ENCODE measurements at regions of chr10 and their contacts with region 1.

Region 1: DNA sequence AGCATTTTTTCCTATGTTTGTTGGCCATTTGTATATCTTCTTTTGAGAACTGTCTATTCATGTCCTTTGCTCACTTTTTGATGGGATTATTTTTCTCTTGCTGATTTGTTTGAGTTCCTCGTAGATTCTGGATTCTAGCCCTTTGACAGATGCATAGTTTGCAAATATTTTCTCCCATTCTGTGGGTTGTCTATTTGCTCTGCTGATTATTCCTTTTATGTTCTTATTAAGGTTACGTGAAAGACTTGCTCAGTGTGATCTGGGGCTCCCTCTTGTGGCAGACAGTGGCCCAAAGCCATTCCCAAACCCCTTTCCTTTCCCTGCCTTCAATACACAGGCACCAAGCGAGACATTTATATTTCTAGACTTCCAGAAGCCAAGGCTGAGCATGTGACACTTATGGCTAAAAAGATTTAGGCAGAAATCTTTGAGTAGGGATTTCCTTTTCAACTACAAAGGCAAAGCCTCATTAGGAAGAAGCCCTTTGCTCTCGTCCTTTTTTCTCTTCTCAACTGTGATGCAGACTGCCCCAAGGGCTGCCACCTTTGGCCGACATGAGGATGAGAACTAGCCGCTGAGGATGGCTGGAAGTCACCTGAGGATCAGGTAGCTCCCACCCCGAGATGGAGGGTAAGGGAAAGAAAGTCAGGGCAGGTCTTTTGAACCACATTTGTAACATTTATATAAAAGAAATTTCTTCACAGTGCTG is 23.6 kb downstream of the ST8SIA6 start:
- DNase-seq: peak; percentile 62 to 92 (median 74)
- H3K4me3 ChIP-seq: no peak overlapping the region
- H3K27ac ChIP-seq: no peak overlapping the region
- H3K4me1 ChIP-seq: no peaks in the 10 kb centered on the region
- H3K27me3 ChIP-seq: peaks cover 11% of the 10 kb centered on the region
- CTCF ChIP-seq: peak; percentile 67 to 91 (median 80)
- POLR2A ChIP-seq: no peak

Region 2: DNA sequence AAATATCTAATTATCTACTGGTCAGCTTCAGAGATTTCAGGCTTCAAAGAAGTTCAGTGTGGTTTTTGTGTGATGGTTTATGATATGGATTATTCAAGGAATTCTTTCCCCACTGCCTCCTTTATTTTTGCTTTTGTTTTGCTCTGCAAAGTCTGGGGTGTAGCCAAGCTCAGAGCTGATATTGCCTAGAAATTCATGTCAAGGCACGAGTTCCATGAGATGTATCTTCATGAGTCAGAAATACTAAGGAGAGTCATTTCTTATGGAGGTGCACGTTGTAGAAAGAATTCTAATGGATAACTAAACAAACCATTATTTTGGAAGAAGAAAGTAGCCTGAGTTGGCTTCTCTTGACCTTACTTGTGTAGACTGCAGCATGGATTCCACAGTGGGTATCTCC is 165.3 kb before region 1 on chr10:
- intact Hi-C with region 1: loop called in 1 of 2 experiments (anchors 10 kb)
- DNase-seq: no peak
- H3K4me3 ChIP-seq: no peak overlapping the region
- H3K27ac ChIP-seq: no peak overlapping the region
- H3K4me1 ChIP-seq: no peaks in the 10 kb centered on the region
- H3K27me3 ChIP-seq: peaks cover 6% of the 10 kb centered on the region
- CTCF ChIP-seq: no peak
- POLR2A ChIP-seq: no peak

Region 3: GRCh38 chr10:17353559-17354300 is 77.1 kb before region 1 on chr10:
- intact Hi-C with region 1: no loop called
- DNase-seq: no peak
- H3K4me3 ChIP-seq: no peak overlapping the region
- H3K27ac ChIP-seq: no peak overlapping the region
- H3K4me1 ChIP-seq: no peaks in the 10 kb centered on the region
- H3K27me3 ChIP-seq: peaks cover 9% of the 10 kb centered on the region
- CTCF ChIP-seq: no peak
- POLR2A ChIP-seq: no peak